ENCODE measurements at regions of chr2 and their contacts with region 1.

Region 1: DNA sequence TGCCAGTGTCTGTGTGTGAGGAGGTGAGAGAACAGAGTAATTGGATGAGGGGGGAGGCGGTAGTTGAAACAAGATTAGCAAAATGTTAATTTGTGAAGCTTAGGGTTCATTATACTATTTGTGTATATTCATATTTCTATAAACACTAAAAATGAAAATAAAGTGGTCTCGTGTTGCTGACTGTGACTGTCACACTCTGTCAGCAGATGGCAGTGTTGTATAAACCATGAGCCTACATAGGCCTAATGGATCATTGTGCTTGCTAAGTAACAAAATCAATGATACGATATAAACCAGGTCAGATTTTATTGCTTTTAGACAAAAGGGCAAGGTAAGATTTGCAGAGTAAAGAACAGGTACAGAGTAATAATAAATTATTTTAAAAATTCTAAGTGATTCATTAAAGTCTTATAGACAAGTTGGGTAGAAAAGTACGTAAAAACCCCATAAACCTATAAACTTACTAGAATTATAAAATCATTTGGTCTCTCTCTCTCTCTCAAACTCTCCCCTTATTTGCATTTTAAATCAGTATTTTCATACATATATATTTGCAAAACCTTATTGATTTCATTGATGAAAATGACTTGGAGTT is 182.7 kb downstream of the RPIA start:
- DNase-seq: no peak
- ATAC-seq: peak; percentile 75
- H3K4me3 Mint-ChIP-seq: no peak overlapping the region
- H3K27ac Mint-ChIP-seq: no peak overlapping the region
- H3K4me1 Mint-ChIP-seq: peaks cover 41% of the 10 kb centered on the region
- H3K27me3 Mint-ChIP-seq: no peaks in the 10 kb centered on the region
- CTCF ChIP-seq: no peak

Region 2: GRCh38 chr2:88950010-88950409 is 75.8 kb after region 1 on chr2:
- CTCF ChIA-PET with region 1: no interaction called
- POLR2A ChIA-PET with region 1: no interaction called
- intact Hi-C with region 1: loop called (anchors 1 kb)
- DNase-seq: no peak
- ATAC-seq: no peak
- H3K4me3 Mint-ChIP-seq: no peak overlapping the region
- H3K27ac Mint-ChIP-seq: no peak overlapping the region
- H3K4me1 Mint-ChIP-seq: peaks cover 6% of the 10 kb centered on the region
- H3K27me3 Mint-ChIP-seq: peaks cover 2% of the 10 kb centered on the region
- CTCF ChIP-seq: no peak